ENCODE measurements at regions of chr4 and their contacts with region 1.

Region 1: GRCh38 chr4:185471235-185472102 is at the start of gene CCDC110:
- DNase-seq: peak; percentile 96
- total RNA-seq, gene CCDC110: 0.67 TPM

Region 2: DNA sequence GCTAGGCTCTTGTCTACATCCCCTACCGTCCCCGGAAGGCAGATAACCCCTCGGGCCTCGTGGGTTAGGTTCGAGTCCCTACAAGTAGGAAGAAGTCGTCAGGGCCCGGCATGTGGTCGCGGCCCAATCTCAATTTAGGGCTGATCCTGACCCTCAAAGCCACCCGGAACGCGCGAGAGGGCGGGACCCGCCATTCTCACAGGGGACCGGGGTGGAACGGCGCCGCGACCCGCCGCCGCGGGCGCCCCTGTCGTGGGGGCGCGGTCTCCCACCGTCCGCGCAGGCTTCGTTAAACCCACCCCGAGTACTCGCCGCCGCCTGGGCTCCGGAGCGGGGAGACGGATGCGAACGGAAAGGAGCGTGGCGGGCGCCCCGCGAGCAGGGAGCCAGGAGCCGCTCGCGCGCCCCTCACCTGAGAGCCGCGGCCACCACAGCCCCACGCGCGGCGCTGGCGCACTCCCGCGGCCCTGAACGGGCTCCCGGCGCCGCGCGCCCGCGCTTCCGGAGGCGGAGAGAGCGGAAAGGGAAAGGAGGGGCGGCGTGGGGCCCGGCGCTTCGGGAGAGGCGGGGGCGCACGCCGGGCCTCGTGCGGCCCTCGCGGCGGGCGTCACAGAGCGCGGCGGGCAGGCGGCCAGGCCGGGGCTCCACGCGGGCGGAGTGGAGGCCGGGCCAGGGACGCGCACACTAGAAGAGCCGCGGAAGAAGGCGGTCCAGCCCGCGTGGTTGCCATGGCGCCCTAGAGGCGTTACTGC is 267.8 kb before region 1 on chr4 and contains the start of gene CFAP97:
- intact Hi-C with region 1: loop called (anchors 5 kb)
- DNase-seq: peak; percentile 95
- total RNA-seq, gene CFAP97: 14.9 TPM

Region 3: GRCh38 chr4:185425647-185426352 is 45.7 kb before region 1 on chr4 and contains the start of gene UFSP2:
- intact Hi-C with region 1: loop called (anchors 5 kb)
- DNase-seq: peak; percentile 95
- total RNA-seq, gene UFSP2: 38.8 TPM

Region 4: DNA sequence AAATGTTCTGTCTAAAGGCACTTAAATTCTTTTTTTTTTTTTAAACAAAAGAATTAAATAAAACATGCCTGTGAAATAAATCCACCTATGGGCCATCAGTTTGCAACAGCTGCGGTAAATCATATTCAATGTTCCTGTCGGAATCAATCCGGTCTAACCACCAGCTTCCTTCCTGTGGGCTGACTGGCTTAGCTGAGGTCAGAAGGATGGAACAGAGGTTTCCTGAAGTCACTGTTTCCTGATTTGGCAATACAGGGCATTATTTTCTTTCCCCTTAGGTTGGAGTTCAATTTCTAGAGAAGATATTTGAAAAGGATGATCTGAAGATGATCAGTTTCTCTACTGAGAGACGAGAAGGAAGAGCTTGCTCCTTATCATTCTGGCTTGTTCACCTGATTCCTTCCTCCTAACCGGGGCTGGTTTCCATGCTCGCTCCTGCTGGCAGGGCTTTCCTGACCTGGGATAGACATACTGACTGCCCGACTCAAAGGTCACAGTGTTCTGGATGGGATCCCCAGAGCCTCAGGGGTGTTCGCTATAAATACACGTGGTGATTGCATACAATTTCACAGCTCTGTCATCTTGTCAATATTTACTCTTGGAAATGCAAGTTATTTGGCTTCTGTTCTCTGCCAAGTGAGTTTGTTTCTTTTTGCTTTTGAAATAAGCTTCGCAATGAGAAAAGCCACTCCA is 42.2 kb after region 1 on chr4:
- intact Hi-C with region 1: loop called (anchors 5 kb)
- DNase-seq: no peak

Region 5: DNA sequence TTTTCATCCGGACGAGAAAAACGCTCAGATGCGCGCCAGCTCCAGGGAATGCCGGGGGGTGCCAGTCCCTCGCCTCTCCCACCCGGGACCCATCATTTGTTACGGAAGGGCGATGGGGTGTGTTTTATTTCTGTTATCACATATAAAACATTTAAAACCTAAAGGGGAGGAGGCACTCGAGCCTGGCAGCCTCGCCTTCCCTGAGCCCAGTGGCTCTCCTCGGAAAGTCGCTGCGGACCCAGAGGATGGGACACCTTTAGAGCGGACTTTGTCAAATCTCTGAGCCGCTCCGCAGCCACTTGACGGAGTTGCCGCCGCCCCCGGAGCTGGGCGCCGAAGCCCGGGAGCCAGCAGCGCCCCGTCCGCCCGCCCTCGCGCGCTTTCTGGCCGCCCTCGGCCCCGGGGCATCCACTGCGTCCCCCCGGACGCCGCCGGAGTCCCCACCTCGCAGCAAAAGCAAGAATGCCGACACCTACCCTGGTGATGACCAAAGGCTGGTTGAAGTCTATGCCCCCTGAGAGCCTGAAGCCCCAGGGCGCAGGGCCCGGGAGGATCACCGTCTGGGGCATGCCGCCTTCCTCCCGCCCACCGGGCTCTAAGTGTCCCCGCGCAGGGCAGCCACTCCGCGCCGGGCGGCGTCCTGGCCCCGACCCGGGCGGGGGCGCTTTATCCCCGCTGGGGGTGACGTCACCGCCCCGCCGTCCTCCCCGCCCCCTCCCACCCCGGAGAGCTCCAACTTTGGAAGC is 63.6 kb after region 1 on chr4 and contains the start of gene PDLIM3:
- intact Hi-C with region 1: loop called (anchors 5 kb)
- DNase-seq: peak; percentile 83
- total RNA-seq, gene PDLIM3: 265 TPM

Region 6: GRCh38 chr4:185597532-185598188 is 126.2 kb after region 1 on chr4:
- intact Hi-C with region 1: loop called (anchors 2 kb)
- DNase-seq: peak; percentile 83

Measured in cardiac septum (tissue), 1 donor.